Ascending aorta (tissue), 2 donors: ENCODE measurements at regions of chr16 and their contacts with region 1.

Region 1: GRCh38 chr16:85524630-85525419 is 88.3 kb upstream of the GSE1 start:
- DNase-seq: peak; percentile 51 to 86
- H3K4me3 ChIP-seq: no peak overlapping the region
- H3K27ac ChIP-seq: peak overlapping the region in 1 of 2 donors; percentile 17
- H3K4me1 ChIP-seq: peaks cover 10 to 32% of the 10 kb centered on the region in 2 donors
- H3K27me3 ChIP-seq: no peaks in the 10 kb centered on the region
- CTCF ChIP-seq: no peak

Region 2: GRCh38 chr16:85369741-85370528 is 154.9 kb before region 1 on chr16:
- intact Hi-C with region 1: no loop called
- DNase-seq: peak in 1 of 2 donors; percentile 87
- H3K4me3 ChIP-seq: peak overlapping the region in 1 of 2 donors; percentile 51
- H3K27ac ChIP-seq: peak overlapping the region; percentile 82 to 87
- H3K4me1 ChIP-seq: peaks cover 20 to 39% of the 10 kb centered on the region in 2 donors
- H3K27me3 ChIP-seq: no peaks in the 10 kb centered on the region
- CTCF ChIP-seq: peak; percentile 83 to 89 (median 84)

Region 3: GRCh38 chr16:85461814-85462713 is 62.8 kb before region 1 on chr16:
- intact Hi-C with region 1: loop called (anchors 5 kb)
- DNase-seq: no peak
- H3K4me3 ChIP-seq: peak overlapping the region; percentile 47 to 55
- H3K27ac ChIP-seq: peak overlapping the region in 1 of 2 donors; percentile 23
- H3K4me1 ChIP-seq: peaks cover 10 to 23% of the 10 kb centered on the region in 2 donors
- H3K27me3 ChIP-seq: no peaks in the 10 kb centered on the region
- CTCF ChIP-seq: no peak